Activated naive CD4-positive, alpha-beta T cell treated with anti-CD3 and anti-CD28 coated beads for 36 hours (primary cell): ENCODE measurements at regions of chrX and their contacts with region 1.

Region 1: GRCh38 chrX:149286940-149287349 is 218.2 kb downstream of the IDS start:
- DNase-seq: peak; percentile 59
- H3K4me3 Mint-ChIP-seq: no peak overlapping the region
- H3K27ac Mint-ChIP-seq: no peak overlapping the region
- H3K4me1 Mint-ChIP-seq: peaks cover 17% of the 10 kb centered on the region
- H3K27me3 Mint-ChIP-seq: no peaks in the 10 kb centered on the region

Region 2: DNA sequence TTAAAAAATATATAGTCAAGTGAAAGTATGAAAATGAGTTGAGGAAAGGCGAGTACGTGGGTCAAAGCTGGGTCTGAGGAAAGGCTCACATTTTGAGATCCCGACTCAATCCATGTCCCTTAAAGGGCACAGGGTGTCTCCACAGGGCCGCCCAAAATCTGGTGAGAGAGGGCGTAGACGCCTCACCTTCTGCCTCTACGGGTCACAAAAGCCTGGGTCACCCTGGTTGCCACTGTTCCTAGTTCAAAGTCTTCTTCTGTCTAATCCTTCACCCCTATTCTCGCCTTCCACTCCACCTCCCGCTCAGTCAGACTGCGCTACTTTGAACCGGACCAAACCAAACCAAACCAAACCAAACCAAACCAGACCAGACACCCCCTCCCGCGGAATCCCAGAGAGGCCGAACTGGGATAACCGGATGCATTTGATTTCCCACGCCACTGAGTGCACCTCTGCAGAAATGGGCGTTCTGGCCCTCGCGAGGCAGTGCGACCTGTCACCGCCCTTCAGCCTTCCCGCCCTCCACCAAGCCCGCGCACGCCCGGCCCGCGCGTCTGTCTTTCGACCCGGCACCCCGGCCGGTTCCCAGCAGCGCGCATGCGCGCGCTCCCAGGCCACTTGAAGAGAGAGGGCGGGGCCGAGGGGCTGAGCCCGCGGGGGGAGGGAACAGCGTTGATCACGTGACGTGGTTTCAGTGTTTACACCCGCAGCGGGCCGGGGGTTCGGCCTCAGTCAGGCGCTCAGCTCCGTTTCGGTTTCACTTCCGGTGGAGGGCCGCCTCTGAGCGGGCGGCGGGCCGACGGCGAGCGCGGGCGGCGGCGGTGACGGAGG is 1375.5 kb before region 1 on chrX and contains the start of gene FMR1:
- CTCF ChIA-PET with region 1: no interaction called
- intact Hi-C with region 1: loop called (anchors 10 kb)
- DNase-seq: peak; percentile 94
- H3K4me3 Mint-ChIP-seq: peak within 1 kb of the TSS; percentile 93
- H3K27ac Mint-ChIP-seq: peak within 1 kb of the TSS; percentile 94
- H3K4me1 Mint-ChIP-seq: peaks cover 24% of the 10 kb centered on the region
- H3K27me3 Mint-ChIP-seq: no peaks in the 10 kb centered on the region
- total RNA-seq, gene FMR1: 24.5 to 25.7 TPM

Region 3: DNA sequence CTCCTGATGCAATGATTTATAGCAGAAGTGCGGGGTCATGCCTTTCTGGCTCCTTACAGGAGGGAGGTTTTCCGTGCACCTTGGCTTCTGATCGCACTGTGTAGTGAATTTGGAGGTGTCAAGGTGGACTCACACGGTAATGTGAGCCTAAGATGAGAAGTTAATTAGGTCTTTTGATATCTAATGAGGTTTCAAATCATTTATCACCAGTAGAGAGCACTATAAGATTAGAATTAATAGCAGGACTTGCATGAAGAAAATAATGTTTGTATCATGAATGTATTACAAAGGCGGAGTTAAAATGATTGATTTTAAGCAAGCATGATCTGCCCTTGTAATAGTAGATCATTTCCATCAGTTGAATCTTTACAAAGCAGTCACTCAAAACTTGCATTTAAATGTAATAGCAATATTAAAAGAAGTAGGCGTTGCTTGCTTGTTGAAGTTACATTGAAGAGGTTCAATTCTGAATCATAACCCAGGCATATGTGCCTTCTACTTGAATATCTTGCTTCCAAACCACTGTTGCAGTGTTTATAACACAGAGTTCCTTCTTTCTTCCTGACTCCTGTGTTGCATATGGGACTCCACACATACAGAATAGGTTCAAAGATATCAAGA is 1153.7 kb before region 1 on chrX:
- CTCF ChIA-PET with region 1: interaction called, 3 read pairs
- intact Hi-C with region 1: loop called (anchors 1 kb)
- DNase-seq: no peak
- H3K4me3 Mint-ChIP-seq: no peak overlapping the region
- H3K27ac Mint-ChIP-seq: no peak overlapping the region
- H3K4me1 Mint-ChIP-seq: no peaks in the 10 kb centered on the region
- H3K27me3 Mint-ChIP-seq: no peaks in the 10 kb centered on the region

Region 4: DNA sequence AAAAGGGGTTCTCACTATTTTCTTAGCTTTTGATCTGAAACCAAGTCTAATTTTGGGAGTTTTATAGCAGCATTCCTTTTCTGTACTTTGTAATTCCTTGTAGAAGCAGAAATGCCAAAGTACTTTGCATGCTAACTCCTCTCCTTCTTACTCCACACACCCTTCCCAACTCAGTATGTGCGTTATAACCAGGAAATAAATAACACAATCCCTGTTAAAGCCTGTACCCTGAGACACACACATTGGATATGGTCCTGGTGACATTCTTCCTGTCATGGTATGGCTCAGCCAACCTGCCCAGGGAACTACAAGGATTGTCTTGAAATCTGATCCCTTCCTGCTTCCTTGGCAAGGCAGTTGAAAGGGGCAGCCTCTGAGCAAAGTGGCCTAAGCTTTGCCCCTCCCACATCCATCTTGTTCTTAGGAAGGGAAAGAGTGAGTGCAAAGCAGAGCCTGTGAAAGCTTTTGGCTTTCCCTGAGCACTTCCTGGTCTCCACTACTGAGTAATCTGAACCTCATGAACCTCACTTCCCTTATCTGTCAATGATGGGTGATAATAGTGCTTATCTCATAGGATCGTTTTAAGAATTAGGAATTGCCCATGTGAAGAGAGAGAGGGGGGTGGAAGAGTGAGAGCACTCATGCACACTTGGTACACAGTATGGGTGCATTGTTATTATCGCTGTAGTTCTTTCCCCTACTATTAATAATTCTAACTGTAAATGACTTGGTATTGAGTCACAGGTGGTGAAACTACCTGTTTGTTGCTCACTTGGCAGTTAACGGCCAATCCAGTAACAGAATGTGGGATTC is 677.2 kb before region 1 on chrX:
- CTCF ChIA-PET with region 1: no interaction called
- intact Hi-C with region 1: loop called (anchors 5 kb)
- DNase-seq: peak; percentile 4
- H3K4me3 Mint-ChIP-seq: peak overlapping the region; percentile 4
- H3K27ac Mint-ChIP-seq: no peak overlapping the region
- H3K4me1 Mint-ChIP-seq: peaks cover 27% of the 10 kb centered on the region
- H3K27me3 Mint-ChIP-seq: no peaks in the 10 kb centered on the region

Region 5: GRCh38 chrX:149129767-149130166 is 157.2 kb before region 1 on chrX:
- CTCF ChIA-PET with region 1: no interaction called
- intact Hi-C with region 1: no loop called
- DNase-seq: no peak
- H3K4me3 Mint-ChIP-seq: no peak overlapping the region
- H3K27ac Mint-ChIP-seq: no peak overlapping the region
- H3K4me1 Mint-ChIP-seq: no peaks in the 10 kb centered on the region
- H3K27me3 Mint-ChIP-seq: no peaks in the 10 kb centered on the region

Region 6: GRCh38 chrX:149151805-149152757 is 134.9 kb before region 1 on chrX:
- CTCF ChIA-PET with region 1: no interaction called
- intact Hi-C with region 1: loop called (anchors 5 kb)
- DNase-seq: no peak
- H3K4me3 Mint-ChIP-seq: no peak overlapping the region
- H3K27ac Mint-ChIP-seq: no peak overlapping the region
- H3K4me1 Mint-ChIP-seq: no peaks in the 10 kb centered on the region
- H3K27me3 Mint-ChIP-seq: no peaks in the 10 kb centered on the region

Region 7: GRCh38 chrX:149198980-149199732 is 87.8 kb before region 1 on chrX:
- CTCF ChIA-PET with region 1: no interaction called
- intact Hi-C with region 1: no loop called
- DNase-seq: peak; percentile 7
- H3K4me3 Mint-ChIP-seq: no peak overlapping the region
- H3K27ac Mint-ChIP-seq: no peak overlapping the region
- H3K4me1 Mint-ChIP-seq: peaks cover 2% of the 10 kb centered on the region
- H3K27me3 Mint-ChIP-seq: peaks cover 2% of the 10 kb centered on the region

Region 8: DNA sequence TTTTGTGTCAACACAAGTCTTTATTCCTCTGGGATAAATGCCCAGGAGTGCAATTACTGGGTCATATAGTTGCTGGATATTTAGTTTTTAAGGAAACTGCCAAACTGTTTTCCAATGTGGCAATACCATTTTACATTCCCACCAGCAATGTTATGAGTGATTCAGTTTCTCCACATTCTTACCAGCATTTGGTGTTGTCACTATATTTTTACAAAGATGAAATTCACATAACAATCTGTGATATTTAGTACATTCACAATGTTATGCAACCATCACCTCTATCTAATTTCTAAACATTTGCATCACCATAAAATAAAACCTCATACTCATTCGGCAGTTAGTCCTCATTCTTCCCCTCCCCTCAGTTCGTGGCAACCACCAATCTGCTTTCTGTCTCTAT is 1151.2 kb after region 1 on chrX:
- CTCF ChIA-PET with region 1: no interaction called
- intact Hi-C with region 1: no loop called
- DNase-seq: no peak
- H3K4me3 Mint-ChIP-seq: no peak overlapping the region
- H3K27ac Mint-ChIP-seq: no peak overlapping the region
- H3K4me1 Mint-ChIP-seq: no peaks in the 10 kb centered on the region
- H3K27me3 Mint-ChIP-seq: no peaks in the 10 kb centered on the region